Naive thymus-derived CD4-positive, alpha-beta T cell (primary cell): ENCODE measurements at regions of chr20 and their contacts with region 1.

Region 1: GRCh38 chr20:3820048-3820900 is at the start of gene AP5S1:
- DNase-seq: peak; percentile 87 to 96 (median 92)
- ATAC-seq: peak; percentile 92
- H3K4me3 ChIP-seq: peak within 1 kb of the TSS; percentile 90
- H3K4me3 Mint-ChIP-seq: peak within 1 kb of the TSS; percentile 85 to 95 (median 92)
- H3K27ac ChIP-seq: peak within 1 kb of the TSS; percentile 98
- H3K27ac Mint-ChIP-seq: peak within 1 kb of the TSS; percentile 94 to 99 (median 97)
- H3K4me1 ChIP-seq: peaks cover 35 to 41% of the 10 kb centered on the region in 2 donors
- H3K4me1 Mint-ChIP-seq: peaks cover 19 to 54% (median 47%) of the 10 kb centered on the region in 7 donors
- H3K27me3 ChIP-seq: no peaks in the 10 kb centered on the region
- H3K27me3 Mint-ChIP-seq: no peaks in the 10 kb centered on the region
- total RNA-seq, gene AP5S1: 7.9 to 14.0 (median 10.8) TPM

Region 2: GRCh38 chr20:3781153-3781910 is 38.9 kb before region 1 on chr20 and contains the start of gene SPEF1:
- CTCF ChIA-PET with region 1: interaction called, 82 read pairs
- POLR2A ChIA-PET with region 1: interaction called, 85 read pairs
- intact Hi-C with region 1: loop called (anchors 1 kb)
- DNase-seq: peak in 5 of 9 donors; percentile 38 to 56 (median 50)
- ATAC-seq: peak; percentile 67
- H3K4me3 ChIP-seq: peak within 1 kb of the TSS; percentile 24
- H3K4me3 Mint-ChIP-seq: peak within 1 kb of the TSS; percentile 1 to 81 (median 61)
- H3K27ac ChIP-seq: peak within 1 kb of the TSS; percentile 28
- H3K27ac Mint-ChIP-seq: peak within 1 kb of the TSS in 7 of 9 donors; percentile 25 to 78 (median 67)
- H3K4me1 ChIP-seq: peaks cover 4 to 10% of the 10 kb centered on the region in 2 donors
- H3K4me1 Mint-ChIP-seq: peaks cover 22 to 51% (median 44%) of the 10 kb centered on the region in 7 donors
- H3K27me3 ChIP-seq: no peaks in the 10 kb centered on the region
- H3K27me3 Mint-ChIP-seq: peaks cover 0 to 29% (median 0%) of the 10 kb centered on the region in 5 donors
- total RNA-seq, gene SPEF1: 0.24 to 0.32 (median 0.29) TPM in 3 of 5 experiments, not detected in the others

Region 3: GRCh38 chr20:3795511-3796468 is 24.5 kb before region 1 on chr20 and contains the start of gene CDC25B:
- CTCF ChIA-PET with region 1: interaction called, 82 read pairs
- POLR2A ChIA-PET with region 1: interaction called, 134 read pairs
- intact Hi-C with region 1: loop called (anchors 1 kb)
- DNase-seq: peak; percentile 64 to 89 (median 84)
- ATAC-seq: peak; percentile 90
- H3K4me3 ChIP-seq: peak within 1 kb of the TSS; percentile 90
- H3K4me3 Mint-ChIP-seq: peak within 1 kb of the TSS; percentile 90 to 99 (median 98)
- H3K27ac ChIP-seq: peak within 1 kb of the TSS; percentile 95
- H3K27ac Mint-ChIP-seq: peak within 1 kb of the TSS; percentile 81 to 99 (median 97)
- H3K4me1 ChIP-seq: peaks cover 27 to 39% of the 10 kb centered on the region in 2 donors
- H3K4me1 Mint-ChIP-seq: peaks cover 24 to 43% (median 39%) of the 10 kb centered on the region in 7 donors
- H3K27me3 ChIP-seq: no peaks in the 10 kb centered on the region
- H3K27me3 Mint-ChIP-seq: peaks cover 0 to 7% (median 0%) of the 10 kb centered on the region in 5 donors
- total RNA-seq, gene CDC25B: 166 to 392 (median 281) TPM

Region 4: GRCh38 chr20:3854462-3854871 is 34.2 kb after region 1 on chr20:
- CTCF ChIA-PET with region 1: interaction called, 5 read pairs
- POLR2A ChIA-PET with region 1: no interaction called
- intact Hi-C with region 1: loop called (anchors 1 kb)
- DNase-seq: no peak
- ATAC-seq: peak; percentile 48
- H3K4me3 ChIP-seq: no peak overlapping the region
- H3K4me3 Mint-ChIP-seq: no peak overlapping the region
- H3K27ac ChIP-seq: no peak overlapping the region
- H3K27ac Mint-ChIP-seq: peak overlapping the region in 3 of 9 donors; percentile 33 to 41 (median 33)
- H3K4me1 ChIP-seq: peaks cover 0 to 3% of the 10 kb centered on the region in 2 donors
- H3K4me1 Mint-ChIP-seq: peaks cover 12 to 22% (median 16%) of the 10 kb centered on the region in 7 donors
- H3K27me3 ChIP-seq: no peaks in the 10 kb centered on the region
- H3K27me3 Mint-ChIP-seq: no peaks in the 10 kb centered on the region

Region 5: DNA sequence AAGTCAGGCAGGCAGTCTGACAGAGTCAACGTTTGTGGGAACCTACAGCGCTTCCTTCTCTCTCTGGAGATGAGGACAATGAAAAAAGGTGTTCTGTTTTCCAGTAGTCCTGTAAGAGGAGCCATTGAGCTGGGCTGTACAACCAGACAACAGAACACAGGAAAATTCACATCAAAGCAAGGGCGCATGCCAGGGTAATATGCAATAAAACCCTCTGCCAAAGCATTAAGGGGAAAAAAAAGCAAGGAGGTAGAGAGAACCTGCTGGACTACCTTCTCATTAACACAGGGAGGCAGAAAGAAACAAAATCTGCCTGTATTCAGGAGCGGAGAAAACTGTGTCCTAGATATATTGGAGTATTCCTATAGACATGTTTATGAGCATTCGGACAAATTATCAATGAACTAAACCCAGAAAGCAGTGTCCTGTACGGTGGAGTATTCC is 193.8 kb after region 1 on chr20:
- CTCF ChIA-PET with region 1: no interaction called
- POLR2A ChIA-PET with region 1: no interaction called
- intact Hi-C with region 1: loop called in 1 of 2 experiments (anchors 1 kb)
- DNase-seq: peak in 7 of 9 donors; percentile 18 to 54 (median 35)
- ATAC-seq: no peak
- H3K4me3 ChIP-seq: no peak overlapping the region
- H3K4me3 Mint-ChIP-seq: peak overlapping the region; percentile 72 to 95 (median 89)
- H3K27ac ChIP-seq: no peak overlapping the region
- H3K27ac Mint-ChIP-seq: peak overlapping the region; percentile 28 to 97 (median 78)
- H3K4me1 ChIP-seq: peaks cover 8 to 9% of the 10 kb centered on the region in 2 donors
- H3K4me1 Mint-ChIP-seq: peaks cover 26 to 52% (median 35%) of the 10 kb centered on the region in 7 donors
- H3K27me3 ChIP-seq: no peaks in the 10 kb centered on the region
- H3K27me3 Mint-ChIP-seq: no peaks in the 10 kb centered on the region

Region 6: DNA sequence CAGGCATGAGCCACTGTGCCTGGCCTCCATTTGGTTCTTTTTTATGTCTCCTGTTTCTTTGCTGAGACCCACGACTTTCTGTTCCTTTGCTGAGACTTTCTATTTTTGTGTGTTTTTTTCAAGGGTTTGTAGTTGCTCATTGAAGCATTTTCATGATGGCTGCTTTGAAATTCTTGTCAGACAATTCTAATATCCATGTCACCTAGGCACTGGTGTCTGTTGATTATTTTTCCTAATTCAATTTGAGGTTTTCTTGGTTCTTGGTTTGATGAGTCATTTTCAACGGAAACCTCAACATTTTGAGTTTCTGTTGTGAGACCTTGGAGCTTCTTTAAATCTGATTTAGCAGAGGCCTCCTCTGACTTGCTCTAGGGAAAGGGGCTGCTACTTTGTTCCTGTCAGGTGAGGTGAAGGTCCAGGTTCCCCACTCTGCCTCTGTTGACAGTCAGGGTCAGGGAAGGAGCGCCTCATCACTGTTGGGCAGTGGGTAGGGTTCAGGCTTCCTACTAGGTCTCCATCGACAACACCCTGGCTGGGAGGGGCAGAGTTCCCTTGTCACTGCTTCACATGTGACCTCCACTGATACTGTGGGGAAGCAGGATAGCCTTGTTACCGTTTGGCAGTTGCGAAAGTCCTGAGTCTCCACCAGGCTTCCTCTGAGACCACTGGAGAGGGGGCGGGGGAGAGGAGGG is 262.3 kb after region 1 on chr20:
- CTCF ChIA-PET with region 1: no interaction called
- POLR2A ChIA-PET with region 1: interaction called, 5 read pairs
- intact Hi-C with region 1: loop called in 1 of 2 experiments (anchors 1 kb)
- DNase-seq: peak in 7 of 9 donors; percentile 8 to 58 (median 30)
- ATAC-seq: peak; percentile 68
- H3K4me3 ChIP-seq: peak overlapping the region; percentile 36
- H3K4me3 Mint-ChIP-seq: peak overlapping the region in 8 of 10 donors; percentile 1 to 81 (median 42)
- H3K27ac ChIP-seq: no peak overlapping the region
- H3K27ac Mint-ChIP-seq: peak overlapping the region; percentile 20 to 98 (median 78)
- H3K4me1 ChIP-seq: peaks cover 18 to 29% of the 10 kb centered on the region in 2 donors
- H3K4me1 Mint-ChIP-seq: peaks cover 25 to 60% (median 43%) of the 10 kb centered on the region in 7 donors
- H3K27me3 ChIP-seq: no peaks in the 10 kb centered on the region
- H3K27me3 Mint-ChIP-seq: peaks cover 0 to 8% (median 0%) of the 10 kb centered on the region in 5 donors